Endothelial cell of umbilical vein (primary cell): ENCODE measurements at regions of chr9 and their contacts with region 1.

Region 1: DNA sequence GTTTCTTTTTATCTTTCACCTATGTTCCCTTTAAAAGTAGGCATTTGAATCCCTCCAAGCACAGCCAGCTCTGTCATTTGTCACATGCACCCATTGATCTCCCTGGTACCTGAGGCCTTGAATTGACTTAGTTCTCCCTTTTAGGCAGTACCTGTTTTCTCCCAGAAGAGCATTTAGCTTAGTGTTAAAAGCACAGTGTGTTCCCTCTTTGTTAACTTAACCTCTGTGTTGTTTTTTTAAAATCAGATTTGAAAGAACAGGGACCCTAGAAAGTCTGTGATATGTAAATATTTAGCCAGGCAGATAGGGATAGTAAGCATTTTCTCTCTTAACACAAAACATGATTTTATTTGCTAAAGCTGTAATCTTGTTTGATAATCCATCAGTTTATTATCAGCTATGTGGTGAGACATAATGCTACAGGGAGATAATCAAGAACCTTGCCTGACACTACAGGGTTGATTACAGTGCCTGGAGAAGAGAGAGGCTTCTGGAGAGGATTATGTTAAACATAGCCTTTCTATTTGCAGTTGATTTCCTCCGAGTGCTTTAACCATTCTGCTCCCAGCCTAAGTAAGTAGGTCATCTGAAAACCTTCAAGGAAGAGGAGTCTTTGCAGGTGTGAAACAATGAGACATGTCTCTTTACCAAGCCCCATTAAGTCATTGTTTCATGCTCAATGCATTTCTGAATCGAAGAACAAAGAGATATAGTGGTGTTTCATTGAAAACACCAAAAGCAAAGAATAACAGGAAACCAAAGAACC is 113.6 kb upstream of the SPATA31D4 start:
- DNase-seq: peak; percentile 61
- H3K4me3 ChIP-seq: peak overlapping the region in 1 of 3 experiments; percentile 19
- H3K27ac ChIP-seq: peak overlapping the region; percentile 55
- H3K4me1 ChIP-seq: peaks cover 21% of the 10 kb centered on the region
- H3K27me3 ChIP-seq: no peaks in the 10 kb centered on the region
- CTCF ChIP-seq: no peak
- POLR2A ChIP-seq: no peak

Region 2: GRCh38 chr9:81683704-81684103 is 130.9 kb before region 1 on chr9:
- CTCF ChIA-PET with region 1: no interaction called
- POLR2A ChIA-PET with region 1: no interaction called
- dilution Hi-C with region 1: no loop called
- intact Hi-C with region 1: no loop called
- DNase-seq: no peak
- H3K4me3 ChIP-seq: no peak overlapping the region
- H3K27ac ChIP-seq: no peak overlapping the region
- H3K4me1 ChIP-seq: peaks cover 43% of the 10 kb centered on the region
- H3K27me3 ChIP-seq: no peaks in the 10 kb centered on the region
- CTCF ChIP-seq: no peak
- POLR2A ChIP-seq: no peak

Region 3: DNA sequence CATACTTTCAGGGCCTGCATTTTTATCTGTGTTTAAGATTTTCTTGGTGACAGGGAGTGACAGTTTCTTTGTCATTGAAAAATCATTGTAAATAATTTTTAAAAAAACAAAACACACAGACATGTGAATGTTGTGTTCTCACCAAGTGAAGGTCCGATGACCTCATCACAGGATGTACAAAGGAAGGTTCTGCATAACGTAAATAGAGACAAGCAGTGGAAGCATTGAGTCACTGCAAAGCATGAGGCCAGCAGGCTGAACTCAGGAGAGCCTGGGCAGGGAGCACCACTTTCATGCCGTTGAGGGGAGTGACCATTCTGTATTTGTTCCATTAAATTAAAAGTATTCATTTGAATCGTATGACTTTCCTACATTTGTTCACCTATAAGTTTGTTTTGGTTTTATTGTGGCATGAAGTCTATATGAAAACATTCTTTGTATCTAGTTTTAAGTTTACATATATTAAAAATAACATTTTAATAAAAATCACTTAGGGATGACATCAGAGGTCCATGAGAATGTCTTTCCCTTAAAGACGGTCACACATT is 54.8 kb before region 1 on chr9:
- CTCF ChIA-PET with region 1: no interaction called
- POLR2A ChIA-PET with region 1: no interaction called
- dilution Hi-C with region 1: no loop called
- intact Hi-C with region 1: loop called (anchors 2 kb)
- DNase-seq: peak; percentile 95
- H3K4me3 ChIP-seq: no peak overlapping the region
- H3K27ac ChIP-seq: peak overlapping the region; percentile 91
- H3K4me1 ChIP-seq: peaks cover 11% of the 10 kb centered on the region
- H3K27me3 ChIP-seq: no peaks in the 10 kb centered on the region
- CTCF ChIP-seq: no peak
- POLR2A ChIP-seq: no peak

Region 4: GRCh38 chr9:81771571-81771970 is 43.0 kb before region 1 on chr9:
- CTCF ChIA-PET with region 1: no interaction called
- POLR2A ChIA-PET with region 1: no interaction called
- dilution Hi-C with region 1: no loop called
- intact Hi-C with region 1: loop called (anchors 5 kb)
- DNase-seq: peak; percentile 85
- H3K4me3 ChIP-seq: no peak overlapping the region
- H3K27ac ChIP-seq: peak overlapping the region; percentile 20
- H3K4me1 ChIP-seq: peaks cover 8% of the 10 kb centered on the region
- H3K27me3 ChIP-seq: no peaks in the 10 kb centered on the region
- CTCF ChIP-seq: no peak
- POLR2A ChIP-seq: no peak

Region 5: GRCh38 chr9:81874931-81875330 is 60.3 kb after region 1 on chr9:
- CTCF ChIA-PET with region 1: no interaction called
- POLR2A ChIA-PET with region 1: no interaction called
- dilution Hi-C with region 1: no loop called
- intact Hi-C with region 1: loop called (anchors 2 kb)
- DNase-seq: peak; percentile 97
- H3K4me3 ChIP-seq: no peak overlapping the region
- H3K27ac ChIP-seq: peak overlapping the region; percentile 95
- H3K4me1 ChIP-seq: peaks cover 38% of the 10 kb centered on the region
- H3K27me3 ChIP-seq: no peaks in the 10 kb centered on the region
- CTCF ChIP-seq: no peak
- POLR2A ChIP-seq: no peak

Region 6: DNA sequence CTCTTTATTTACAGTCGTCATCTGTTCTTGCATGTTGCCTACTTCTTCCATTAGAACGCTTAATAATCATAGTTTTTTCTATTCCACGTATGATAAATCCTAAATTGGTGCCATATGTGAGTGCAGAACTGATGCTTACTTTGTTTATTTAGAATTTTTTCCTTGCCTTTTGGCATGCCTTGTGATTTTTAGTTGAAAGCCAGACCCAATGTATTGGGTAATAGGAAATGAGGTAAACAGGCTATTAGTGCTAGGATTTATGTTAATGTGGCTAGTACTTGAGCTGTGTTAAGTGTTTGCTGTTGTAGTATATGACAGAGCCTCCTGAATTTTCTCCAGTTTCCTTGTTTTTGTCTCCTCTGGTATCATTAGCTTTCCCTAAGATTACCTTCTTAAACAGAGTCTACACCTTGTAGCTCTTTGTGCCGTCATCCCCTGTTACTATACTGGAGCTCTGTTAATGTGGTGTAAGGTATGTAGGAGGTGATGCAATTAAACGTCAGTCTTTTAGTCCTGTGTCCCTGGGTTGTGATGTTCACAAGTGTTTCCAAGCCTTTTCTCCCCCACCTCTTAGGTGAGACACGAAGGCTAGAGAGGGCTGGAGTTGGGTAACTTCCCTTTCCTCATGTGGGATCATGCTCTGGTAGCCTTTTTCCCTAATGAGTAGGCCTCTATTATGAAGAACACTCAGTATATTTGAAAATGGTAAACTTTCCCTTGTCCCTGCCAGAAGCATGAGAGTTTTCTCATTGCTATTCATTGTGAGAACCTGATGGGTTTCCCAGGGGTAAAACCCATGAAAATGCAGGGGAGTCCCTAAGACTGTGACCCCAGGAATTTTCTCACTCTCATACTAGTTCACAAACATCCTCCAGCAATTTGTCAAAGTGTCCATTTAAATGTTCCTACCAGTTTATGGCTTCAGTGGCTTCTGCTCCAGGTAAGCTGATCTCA is 149.9 kb after region 1 on chr9:
- CTCF ChIA-PET with region 1: no interaction called
- POLR2A ChIA-PET with region 1: no interaction called
- dilution Hi-C with region 1: no loop called
- intact Hi-C with region 1: no loop called
- DNase-seq: no peak
- H3K4me3 ChIP-seq: no peak overlapping the region
- H3K27ac ChIP-seq: no peak overlapping the region
- H3K4me1 ChIP-seq: no peaks in the 10 kb centered on the region
- H3K27me3 ChIP-seq: no peaks in the 10 kb centered on the region
- CTCF ChIP-seq: no peak
- POLR2A ChIP-seq: no peak

Region 7: DNA sequence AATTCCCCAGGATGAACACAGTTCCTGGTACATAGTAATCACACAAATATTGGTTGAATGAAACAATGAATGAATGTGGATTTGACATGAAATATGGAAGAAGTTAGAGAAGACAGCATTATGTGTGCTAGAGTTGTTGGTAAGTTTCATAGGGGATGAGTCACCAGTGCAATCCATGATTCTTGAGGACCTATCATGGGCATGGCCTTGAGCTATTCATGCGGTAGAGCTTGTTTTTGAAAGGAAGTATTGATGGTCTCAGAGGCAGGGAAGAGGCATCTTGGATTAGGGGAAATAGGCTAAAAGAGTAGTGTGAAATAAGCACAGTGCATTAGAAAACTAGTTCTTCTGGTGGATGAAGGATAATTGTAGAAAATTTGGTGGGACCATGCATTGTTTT is 196.1 kb after region 1 on chr9:
- CTCF ChIA-PET with region 1: no interaction called
- POLR2A ChIA-PET with region 1: no interaction called
- dilution Hi-C with region 1: no loop called
- intact Hi-C with region 1: no loop called
- DNase-seq: no peak
- H3K4me3 ChIP-seq: no peak overlapping the region
- H3K27ac ChIP-seq: no peak overlapping the region
- H3K4me1 ChIP-seq: no peaks in the 10 kb centered on the region
- H3K27me3 ChIP-seq: no peaks in the 10 kb centered on the region
- CTCF ChIP-seq: no peak
- POLR2A ChIP-seq: no peak